ENCODE measurements at regions of chr19 and their contacts with region 1.

Region 1: GRCh38 chr19:10690341-10690781 is 10.9 kb upstream of the QTRT1 start:
- DNase-seq: no peak
- ATAC-seq: no peak
- H3K4me3 ChIP-seq: no peak overlapping the region
- H3K27ac ChIP-seq: no peak overlapping the region
- H3K4me1 ChIP-seq: peaks cover 3 to 31% (median 17%) of the 10 kb centered on the region in 12 donors
- H3K27me3 ChIP-seq: no peaks in the 10 kb centered on the region
- CTCF ChIP-seq: no peak
- POLR2A ChIP-seq: no peak

Region 2: GRCh38 chr19:10653715-10654492 is 36.5 kb before region 1 on chr19 and contains the start of gene ILF3:
- intact Hi-C with region 1: loop called in 4 of 10 experiments (anchors 5 kb)
- DNase-seq: peak; percentile 99 to 100 (median 100)
- ATAC-seq: peak; percentile 90 to 95 (median 93)
- H3K4me3 ChIP-seq: peak within 1 kb of the TSS; percentile 75 to 100 (median 94)
- H3K27ac ChIP-seq: peak within 1 kb of the TSS; percentile 86 to 99 (median 98)
- H3K4me1 ChIP-seq: peaks cover 0 to 50% (median 36%) of the 10 kb centered on the region in 12 donors
- H3K27me3 ChIP-seq: no peaks in the 10 kb centered on the region
- CTCF ChIP-seq: no peak
- POLR2A ChIP-seq: peak in 1 of 2 donors; percentile 82
- total RNA-seq, gene ILF3: 45.7 to 140 (median 118) TPM

Measured in heart left ventricle (tissue), 16 donors.